ENCODE measurements at regions of chr10 and their contacts with region 1.

Region 1: DNA sequence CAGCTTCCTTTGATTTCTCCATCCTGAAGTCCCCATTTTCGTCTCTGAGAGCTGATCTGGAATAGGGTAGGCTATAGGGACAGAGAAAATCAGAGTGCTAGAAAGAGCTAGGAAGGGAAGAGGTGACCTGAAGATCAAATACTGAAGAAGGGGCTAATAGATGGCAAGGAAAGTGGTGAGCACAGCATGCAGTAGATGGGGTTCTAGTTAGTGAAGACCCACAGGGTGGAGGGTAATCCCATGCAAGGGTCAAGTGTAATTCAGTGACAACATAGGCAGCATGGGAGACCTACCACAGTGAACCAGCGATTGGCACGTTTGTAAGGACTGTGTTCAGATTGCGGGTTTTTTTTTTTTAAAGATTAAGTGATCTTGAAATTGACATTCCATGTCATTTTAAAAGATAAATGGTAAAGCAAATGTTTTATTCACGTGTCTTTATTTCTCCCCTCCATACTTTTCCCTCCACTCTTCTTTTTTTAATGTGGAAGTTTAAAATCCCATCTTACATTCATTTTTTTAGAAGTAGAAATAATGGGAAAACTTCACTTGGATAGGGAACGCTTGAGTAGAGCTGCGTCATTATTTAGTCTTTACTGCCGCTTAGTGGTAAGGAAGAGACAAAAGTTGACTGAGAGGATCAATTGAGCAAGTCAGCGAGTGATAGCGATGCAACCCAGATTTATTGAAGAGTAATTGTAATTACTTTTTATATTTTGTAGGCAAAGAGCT is 21.0 kb upstream of the ABI1 start:
- DNase-seq: no peak
- H3K4me3 ChIP-seq: no peak overlapping the region
- H3K27me3 ChIP-seq: no peaks in the 10 kb centered on the region
- CTCF ChIP-seq: peak; percentile 74

Region 2: GRCh38 chr10:26665080-26666048 is 216.4 kb before region 1 on chr10:
- CTCF ChIA-PET with region 1: no interaction called
- POLR2A ChIA-PET with region 1: no interaction called
- DNase-seq: no peak
- H3K4me3 ChIP-seq: no peak overlapping the region
- H3K27me3 ChIP-seq: no peaks in the 10 kb centered on the region
- CTCF ChIP-seq: no peak

Region 3: GRCh38 chr10:26685441-26685840 is 196.3 kb before region 1 on chr10:
- CTCF ChIA-PET with region 1: interaction called, 22 read pairs
- POLR2A ChIA-PET with region 1: interaction called, 10 read pairs
- DNase-seq: no peak
- H3K4me3 ChIP-seq: no peak overlapping the region
- H3K27me3 ChIP-seq: no peaks in the 10 kb centered on the region
- CTCF ChIP-seq: no peak

Region 4: DNA sequence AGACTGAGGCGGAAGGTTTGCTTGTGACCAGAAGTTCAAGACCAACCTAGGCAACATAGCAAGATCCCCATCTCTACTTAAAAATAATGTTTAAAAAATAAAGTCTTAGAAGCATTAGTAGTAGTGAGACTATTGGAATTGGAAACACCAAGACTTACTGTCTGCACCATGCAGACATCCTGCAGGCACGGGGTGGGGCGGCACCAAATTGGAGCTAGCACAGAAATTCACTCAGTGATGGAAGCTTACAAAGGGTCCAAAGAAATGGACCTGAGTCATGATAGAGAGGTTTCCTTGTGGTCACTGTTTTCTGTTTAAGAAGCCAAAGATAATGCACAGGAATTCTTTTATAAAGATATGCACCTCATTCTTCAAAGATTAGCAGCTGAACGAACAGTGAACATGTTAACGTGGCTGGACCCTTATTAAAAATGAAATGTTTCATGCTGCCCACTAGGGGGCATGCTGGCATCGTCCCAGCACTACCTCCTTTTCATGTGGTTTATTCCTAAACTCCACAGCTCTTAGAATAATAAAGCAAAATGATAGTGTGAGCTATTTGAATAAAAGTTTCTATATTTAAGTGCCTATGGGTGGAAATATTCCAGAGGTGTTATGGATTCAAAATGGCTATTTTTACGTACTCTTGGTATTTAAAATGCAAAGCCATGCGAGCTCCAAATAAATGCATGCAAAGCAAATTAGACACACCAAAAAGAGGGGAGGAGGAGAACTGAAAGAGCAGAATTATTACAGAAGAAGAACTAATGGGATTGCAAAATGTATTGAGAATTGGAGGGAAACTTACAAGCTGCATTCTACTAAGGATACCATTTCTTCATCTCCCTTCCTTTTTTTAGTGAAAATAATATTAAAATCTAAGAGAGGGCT is 155.7 kb before region 1 on chr10:
- CTCF ChIA-PET with region 1: interaction called, 171 read pairs
- POLR2A ChIA-PET with region 1: interaction called, 9 read pairs
- DNase-seq: no peak
- H3K4me3 ChIP-seq: no peak overlapping the region
- H3K27me3 ChIP-seq: no peaks in the 10 kb centered on the region
- CTCF ChIP-seq: peak; percentile 76

Region 5: DNA sequence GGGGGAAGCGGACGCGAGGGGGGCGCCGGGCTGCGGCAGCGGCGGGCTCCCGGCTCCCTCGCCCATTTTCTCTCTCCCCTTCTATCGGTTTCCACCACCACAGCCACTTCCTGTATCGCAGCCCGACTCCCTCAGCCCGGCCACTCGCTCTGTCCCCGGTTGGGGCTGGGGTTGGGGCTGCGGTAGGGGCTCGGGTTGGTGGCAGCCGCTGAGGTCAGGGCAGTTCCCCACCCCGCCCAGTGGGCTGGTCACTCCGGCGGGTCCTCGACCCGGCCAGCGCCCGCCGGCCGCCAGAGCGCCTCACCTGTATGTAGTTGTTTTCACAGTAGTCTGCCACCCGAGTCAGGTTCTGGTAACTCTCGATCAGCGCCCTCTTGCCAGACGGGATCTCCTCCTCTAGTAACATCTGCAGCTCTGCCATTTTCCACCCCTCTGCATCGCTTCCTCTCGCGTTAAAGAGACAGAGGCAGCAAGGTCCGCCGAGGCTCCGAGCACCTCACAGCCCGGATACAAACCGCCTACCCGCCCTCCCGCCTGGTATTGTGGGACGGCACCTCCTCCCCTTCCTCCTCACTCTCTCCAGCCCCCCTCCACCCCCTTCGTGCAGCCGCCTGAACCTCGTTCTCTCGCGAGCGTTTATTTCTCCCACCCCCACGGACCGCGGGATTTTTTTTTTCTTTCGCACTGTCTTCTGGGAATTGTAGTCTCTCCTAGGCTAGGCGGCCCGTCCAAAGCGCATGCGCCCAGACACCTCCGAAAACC is 21.1 kb before region 1 on chr10 and contains the start of gene ABI1:
- CTCF ChIA-PET with region 1: interaction called, 13 read pairs
- POLR2A ChIA-PET with region 1: no interaction called
- DNase-seq: peak; percentile 91
- H3K4me3 ChIP-seq: peak within 1 kb of the TSS; percentile 93
- H3K27me3 ChIP-seq: no peaks in the 10 kb centered on the region; the same call in 1 of the 2 replicates
- CTCF ChIP-seq: no peak
- polyA plus RNA-seq, gene ABI1: 67.0 and 71.1 TPM in 2 replicates

Region 6: DNA sequence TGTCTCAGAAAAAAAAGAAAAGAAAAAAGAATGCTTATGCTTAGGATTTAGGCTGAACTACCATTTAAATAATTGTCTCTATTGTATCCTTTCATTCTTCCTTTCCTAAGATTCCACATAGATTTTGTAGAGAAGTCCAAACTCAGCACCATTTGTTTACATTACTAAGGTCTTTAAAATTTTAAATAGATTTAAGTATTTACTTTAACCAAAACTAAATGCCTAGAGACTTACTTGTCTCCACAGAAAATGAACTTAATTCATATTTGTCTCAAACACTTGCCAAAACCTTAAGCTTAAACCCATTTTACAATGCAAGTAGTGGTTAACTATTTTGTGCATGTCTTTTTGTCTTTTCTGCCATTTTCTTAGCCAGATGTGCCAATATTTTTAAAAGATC is 33.1 kb after region 1 on chr10:
- CTCF ChIA-PET with region 1: no interaction called
- POLR2A ChIA-PET with region 1: no interaction called
- DNase-seq: no peak
- H3K4me3 ChIP-seq: no peak overlapping the region
- H3K27me3 ChIP-seq: no peaks in the 10 kb centered on the region
- CTCF ChIP-seq: no peak